Activated CD4-positive, alpha-beta memory T cell treated with anti-CD3 and anti-CD28 coated beads for 36 hours (primary cell): ENCODE measurements at regions of chr19 and their contacts with region 1.

Region 1: DNA sequence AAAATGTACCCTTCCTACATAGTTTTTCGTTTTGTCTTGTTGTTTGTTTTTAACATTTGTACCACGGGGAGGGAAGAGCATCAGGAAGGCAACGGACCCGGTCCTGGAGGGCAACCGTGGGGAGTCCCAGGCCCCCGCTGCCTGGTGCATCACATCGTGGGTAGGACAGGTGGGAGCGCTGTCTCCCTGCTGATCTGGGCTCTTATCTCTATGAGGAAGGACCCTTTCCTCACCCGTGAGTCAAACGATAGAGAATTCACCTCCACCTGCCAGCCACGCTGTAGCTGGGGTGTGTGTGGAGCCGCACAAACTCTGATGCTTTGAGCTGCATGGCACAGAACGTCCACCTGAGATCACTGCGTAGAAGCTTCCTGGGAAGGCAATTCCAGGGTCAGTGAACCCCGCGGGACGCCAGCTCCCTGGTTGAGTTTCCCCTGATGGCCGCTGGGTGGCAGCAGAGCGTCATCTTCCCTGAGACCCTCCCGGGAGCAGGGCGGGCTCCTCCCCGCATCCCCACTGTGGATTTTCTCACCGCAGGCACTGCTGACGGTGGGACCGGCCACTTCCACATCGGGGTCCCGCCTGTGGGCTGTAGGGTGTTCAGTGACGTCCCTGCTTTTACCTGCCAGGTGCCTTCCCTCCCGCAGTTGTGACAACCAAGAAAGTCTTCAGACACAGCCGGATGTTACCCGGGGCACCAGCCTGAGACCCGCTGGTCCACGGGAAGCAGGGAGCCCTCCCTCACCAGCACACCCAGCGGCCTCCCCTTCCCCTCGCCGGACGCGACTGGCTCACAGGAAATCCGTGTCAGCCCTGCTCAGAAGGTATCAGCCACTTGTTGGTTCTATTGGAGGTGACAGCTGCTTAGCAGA is 54.7 kb downstream of the ZNF787 start:
- DNase-seq: peak; percentile 70
- H3K4me3 Mint-ChIP-seq: peak overlapping the region; percentile 48
- H3K27ac Mint-ChIP-seq: no peak overlapping the region
- H3K4me1 Mint-ChIP-seq: peaks cover 10% of the 10 kb centered on the region
- H3K27me3 Mint-ChIP-seq: peaks cover 28% of the 10 kb centered on the region

Region 2: GRCh38 chr19:56170261-56170660 is 103.9 kb after region 1 on chr19:
- CTCF ChIA-PET with region 1: interaction called, 40 read pairs
- POLR2A ChIA-PET with region 1: no interaction called
- intact Hi-C with region 1: no loop called
- DNase-seq: no peak
- H3K4me3 Mint-ChIP-seq: no peak overlapping the region
- H3K27ac Mint-ChIP-seq: no peak overlapping the region
- H3K4me1 Mint-ChIP-seq: no peaks in the 10 kb centered on the region
- H3K27me3 Mint-ChIP-seq: peaks cover 7% of the 10 kb centered on the region

Region 3: GRCh38 chr19:56176881-56177280 is 110.5 kb after region 1 on chr19:
- CTCF ChIA-PET with region 1: interaction called, 40 read pairs
- POLR2A ChIA-PET with region 1: no interaction called
- intact Hi-C with region 1: no loop called
- DNase-seq: no peak
- H3K4me3 Mint-ChIP-seq: no peak overlapping the region
- H3K27ac Mint-ChIP-seq: no peak overlapping the region
- H3K4me1 Mint-ChIP-seq: no peaks in the 10 kb centered on the region
- H3K27me3 Mint-ChIP-seq: no peaks in the 10 kb centered on the region

Region 4: GRCh38 chr19:56217039-56217949 is 150.9 kb after region 1 on chr19:
- CTCF ChIA-PET with region 1: no interaction called
- POLR2A ChIA-PET with region 1: no interaction called
- intact Hi-C with region 1: no loop called
- DNase-seq: no peak
- H3K4me3 Mint-ChIP-seq: no peak overlapping the region
- H3K27ac Mint-ChIP-seq: no peak overlapping the region
- H3K4me1 Mint-ChIP-seq: peaks cover 6% of the 10 kb centered on the region
- H3K27me3 Mint-ChIP-seq: peaks cover 19% of the 10 kb centered on the region

Region 5: DNA sequence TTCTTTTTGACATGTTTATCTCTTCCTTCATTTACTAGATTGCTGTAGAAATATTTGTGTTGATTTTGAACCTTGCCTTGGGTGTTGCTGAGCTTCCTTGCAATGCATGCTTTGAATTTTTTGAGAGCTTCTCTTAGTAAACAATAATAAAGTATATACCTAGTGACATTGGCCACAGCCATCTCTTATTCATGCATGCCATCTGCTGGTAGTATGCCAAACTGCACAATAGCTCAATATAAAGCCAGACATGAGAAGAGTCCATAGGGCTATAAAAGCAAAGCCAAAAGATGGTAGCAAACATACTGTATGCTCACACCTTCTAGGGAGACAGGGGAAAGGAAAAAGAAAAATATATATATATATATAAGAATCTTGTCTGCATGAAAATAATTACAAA is 267.1 kb after region 1 on chr19:
- CTCF ChIA-PET with region 1: interaction called, 34 read pairs
- POLR2A ChIA-PET with region 1: no interaction called
- intact Hi-C with region 1: no loop called
- DNase-seq: peak; percentile 34
- H3K4me3 Mint-ChIP-seq: no peak overlapping the region
- H3K27ac Mint-ChIP-seq: no peak overlapping the region
- H3K4me1 Mint-ChIP-seq: no peaks in the 10 kb centered on the region
- H3K27me3 Mint-ChIP-seq: peaks cover 5% of the 10 kb centered on the region

Region 6: GRCh38 chr19:56477429-56478338 is 411.3 kb after region 1 on chr19:
- CTCF ChIA-PET with region 1: no interaction called
- POLR2A ChIA-PET with region 1: no interaction called
- intact Hi-C with region 1: no loop called
- DNase-seq: peak; percentile 27
- H3K4me3 Mint-ChIP-seq: peak overlapping the region; percentile 71
- H3K27ac Mint-ChIP-seq: no peak overlapping the region
- H3K4me1 Mint-ChIP-seq: peaks cover 9% of the 10 kb centered on the region
- H3K27me3 Mint-ChIP-seq: peaks cover 20% of the 10 kb centered on the region